Body of pancreas (tissue), 4 donors: ENCODE measurements at regions of chr11 and their contacts with region 1.

Region 1: DNA sequence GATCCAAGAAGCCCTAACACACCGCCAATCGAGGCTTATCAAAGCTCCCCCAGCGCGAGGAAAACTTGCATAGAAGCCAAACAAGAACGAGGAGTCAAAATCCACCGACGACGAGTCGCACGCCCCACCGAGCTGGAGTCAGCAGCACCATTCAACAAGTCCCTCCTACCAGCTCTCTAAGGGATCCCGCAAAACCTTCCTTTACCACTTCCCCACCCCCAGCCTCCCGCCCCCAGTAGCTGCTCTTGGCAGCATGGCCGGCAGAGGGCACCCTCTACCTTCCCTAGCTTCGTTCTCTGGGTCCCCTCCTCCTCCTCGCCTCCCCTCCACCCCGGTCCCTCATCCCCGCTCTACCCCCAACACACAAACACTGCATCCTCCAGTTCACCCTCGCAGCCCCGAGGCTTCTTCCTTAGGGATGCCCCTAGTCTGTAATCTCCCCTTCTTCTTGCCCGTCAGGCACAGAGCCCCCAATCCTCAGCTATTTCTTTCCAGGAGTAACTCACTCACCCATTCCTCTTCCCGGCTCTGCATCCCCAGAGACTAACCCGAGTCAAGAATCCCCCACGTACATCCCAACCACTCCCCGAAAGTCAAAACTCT is 1.3 kb downstream of the BDNF start:
- DNase-seq: peak; percentile 66 to 80 (median 73)
- ATAC-seq: peak; percentile 81
- H3K4me3 ChIP-seq: no peak overlapping the region
- H3K27ac ChIP-seq: no peak overlapping the region
- H3K4me1 ChIP-seq: peaks cover 31% of the 10 kb centered on the region
- H3K27me3 ChIP-seq: peaks cover 0 to 7% of the 10 kb centered on the region in 2 donors
- CTCF ChIP-seq: peak; percentile 51 to 90 (median 66)
- POLR2A ChIP-seq: no peak

Region 2: GRCh38 chr11:28524108-28524507 is 825.1 kb after region 1 on chr11:
- intact Hi-C with region 1: loop called (anchors 5 kb)
- DNase-seq: no peak
- ATAC-seq: no peak
- H3K4me3 ChIP-seq: no peak overlapping the region
- H3K27ac ChIP-seq: no peak overlapping the region
- H3K4me1 ChIP-seq: no peaks in the 10 kb centered on the region
- H3K27me3 ChIP-seq: no peaks in the 10 kb centered on the region
- CTCF ChIP-seq: no peak
- POLR2A ChIP-seq: no peak

Region 3: GRCh38 chr11:29328961-29329441 is 1630.0 kb after region 1 on chr11:
- intact Hi-C with region 1: loop called (anchors 10 kb)
- DNase-seq: no peak
- ATAC-seq: no peak
- H3K4me3 ChIP-seq: no peak overlapping the region
- H3K27ac ChIP-seq: no peak overlapping the region
- H3K4me1 ChIP-seq: peaks cover 3% of the 10 kb centered on the region
- H3K27me3 ChIP-seq: no peaks in the 10 kb centered on the region
- CTCF ChIP-seq: peak in 6 of 7 experiments; percentile 19 to 44 (median 27)
- POLR2A ChIP-seq: no peak